ENCODE measurements at regions of chr19 and their contacts with region 1.

Region 1: GRCh38 chr19:12806239-12807081 is at the start of gene RNASEH2A:
- DNase-seq: peak; percentile 73 to 94 (median 84)
- ATAC-seq: peak; percentile 91
- H3K4me3 ChIP-seq: peak within 1 kb of the TSS; percentile 64
- H3K4me3 Mint-ChIP-seq: peak within 1 kb of the TSS; percentile 96
- H3K27ac ChIP-seq: peak within 1 kb of the TSS in 1 of 2 donors; percentile 23
- H3K27ac Mint-ChIP-seq: peak within 1 kb of the TSS; percentile 88
- H3K4me1 ChIP-seq: peaks cover 26% of the 10 kb centered on the region
- H3K4me1 Mint-ChIP-seq: peaks cover 21% of the 10 kb centered on the region
- H3K27me3 ChIP-seq: no peaks in the 10 kb centered on the region
- H3K27me3 Mint-ChIP-seq: no peaks in the 10 kb centered on the region
- CTCF ChIP-seq: no peak
- total RNA-seq, gene RNASEH2A: 1.5 to 2.7 TPM

Region 2: DNA sequence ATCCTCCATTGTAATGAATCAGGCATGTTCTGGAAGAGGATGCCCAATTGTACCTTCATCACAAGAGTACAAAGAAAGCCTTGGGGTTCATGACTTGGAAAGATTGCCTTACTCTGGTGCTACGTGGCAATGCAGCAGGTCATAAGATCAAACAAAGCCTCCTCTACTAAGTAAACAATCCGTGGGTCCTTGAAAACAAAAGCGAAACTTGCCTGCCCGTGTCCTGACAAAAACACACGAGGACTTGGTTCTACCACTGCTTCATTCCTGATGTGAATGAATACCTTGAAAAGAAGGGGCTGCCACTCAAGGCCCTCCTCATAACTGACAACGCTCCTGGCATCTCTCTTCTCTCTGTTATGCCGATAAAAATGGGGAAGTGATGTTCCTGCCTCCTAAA is 491.9 kb before region 1 on chr19:
- CTCF ChIA-PET with region 1: no interaction called
- POLR2A ChIA-PET with region 1: no interaction called
- intact Hi-C with region 1: no loop called
- DNase-seq: peak in 1 of 14 experiments; percentile 21
- ATAC-seq: no peak
- H3K4me3 ChIP-seq: no peak overlapping the region
- H3K4me3 Mint-ChIP-seq: no peak overlapping the region
- H3K27ac ChIP-seq: no peak overlapping the region
- H3K27ac Mint-ChIP-seq: no peak overlapping the region
- H3K4me1 ChIP-seq: no peaks in the 10 kb centered on the region
- H3K4me1 Mint-ChIP-seq: peaks cover 5% of the 10 kb centered on the region
- H3K27me3 ChIP-seq: no peaks in the 10 kb centered on the region
- H3K27me3 Mint-ChIP-seq: no peaks in the 10 kb centered on the region
- CTCF ChIP-seq: no peak

Region 3: GRCh38 chr19:12782229-12783028 is 24.0 kb before region 1 on chr19:
- CTCF ChIA-PET with region 1: interaction called, 8 read pairs
- POLR2A ChIA-PET with region 1: interaction called, 11 read pairs
- intact Hi-C with region 1: no loop called
- DNase-seq: peak; percentile 89 to 99 (median 94)
- ATAC-seq: peak; percentile 75
- H3K4me3 ChIP-seq: peak overlapping the region; percentile 61
- H3K4me3 Mint-ChIP-seq: peak overlapping the region; percentile 92
- H3K27ac ChIP-seq: peak overlapping the region; percentile 91 to 98
- H3K27ac Mint-ChIP-seq: no peak overlapping the region
- H3K4me1 ChIP-seq: peaks cover 85% of the 10 kb centered on the region
- H3K4me1 Mint-ChIP-seq: peaks cover 41% of the 10 kb centered on the region
- H3K27me3 ChIP-seq: no peaks in the 10 kb centered on the region
- H3K27me3 Mint-ChIP-seq: no peaks in the 10 kb centered on the region
- CTCF ChIP-seq: no peak

Region 4: GRCh38 chr19:12837225-12837624 is 30.8 kb after region 1 on chr19:
- CTCF ChIA-PET with region 1: interaction called, 3 read pairs
- POLR2A ChIA-PET with region 1: no interaction called
- intact Hi-C with region 1: loop called in 1 of 2 experiments (anchors 2 kb)
- DNase-seq: no peak
- ATAC-seq: no peak
- H3K4me3 ChIP-seq: no peak overlapping the region
- H3K4me3 Mint-ChIP-seq: no peak overlapping the region
- H3K27ac ChIP-seq: no peak overlapping the region
- H3K27ac Mint-ChIP-seq: no peak overlapping the region
- H3K4me1 ChIP-seq: peaks cover 56% of the 10 kb centered on the region
- H3K4me1 Mint-ChIP-seq: peaks cover 51% of the 10 kb centered on the region
- H3K27me3 ChIP-seq: peaks cover 86 to 91% of the 10 kb centered on the region in 2 experiments
- H3K27me3 Mint-ChIP-seq: peaks cover 88% of the 10 kb centered on the region
- CTCF ChIP-seq: no peak